Activated B cell treated with CpG ODN at 0.5 μM for 24 hours (primary cell): ENCODE measurements at regions of chr19 and their contacts with region 1.

Region 1: DNA sequence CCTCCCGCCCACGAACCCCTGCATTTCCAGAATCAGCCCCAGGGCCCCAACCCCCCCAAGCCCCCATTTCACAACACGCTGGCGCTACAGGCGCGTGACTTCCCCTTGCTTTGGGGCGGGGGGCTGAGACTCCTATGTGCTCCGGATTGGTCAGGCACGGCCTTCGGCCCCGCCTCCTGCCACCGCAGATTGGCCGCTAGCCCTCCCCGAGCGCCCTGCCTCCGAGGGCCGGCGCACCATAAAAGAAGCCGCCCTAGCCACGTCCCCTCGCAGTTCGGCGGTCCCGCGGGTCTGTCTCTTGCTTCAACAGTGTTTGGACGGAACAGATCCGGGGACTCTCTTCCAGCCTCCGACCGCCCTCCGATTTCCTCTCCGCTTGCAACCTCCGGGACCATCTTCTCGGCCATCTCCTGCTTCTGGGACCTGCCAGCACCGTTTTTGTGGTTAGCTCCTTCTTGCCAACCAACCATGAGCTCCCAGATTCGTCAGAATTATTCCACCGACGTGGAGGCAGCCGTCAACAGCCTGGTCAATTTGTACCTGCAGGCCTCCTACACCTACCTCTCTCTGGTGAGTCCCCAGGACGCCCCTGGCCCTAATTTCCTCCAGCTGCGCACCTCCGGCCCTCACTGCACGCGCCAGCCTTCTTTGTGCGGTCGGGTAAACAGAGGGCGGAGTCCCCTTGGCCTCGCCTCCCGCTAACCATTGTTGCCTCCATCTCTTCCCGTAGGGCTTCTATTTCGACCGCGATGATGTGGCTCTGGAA is at the start of gene FTL:
- DNase-seq: peak; percentile 88
- ATAC-seq: peak; percentile 80
- H3K4me3 Mint-ChIP-seq: peak within 1 kb of the TSS; percentile 99
- H3K27ac Mint-ChIP-seq: peak within 1 kb of the TSS; percentile 99
- H3K4me1 Mint-ChIP-seq: peaks cover 70% of the 10 kb centered on the region
- H3K27me3 Mint-ChIP-seq: no peaks in the 10 kb centered on the region
- CTCF ChIP-seq: no peak
- total RNA-seq, gene FTL: 888 and 935 TPM in 2 replicates

Region 2: GRCh38 chr19:48795055-48795684 is 170.1 kb before region 1 on chr19:
- CTCF ChIA-PET with region 1: interaction called, 46 read pairs
- POLR2A ChIA-PET with region 1: interaction called, 6 read pairs
- intact Hi-C with region 1: loop called (anchors 1 kb)
- DNase-seq: peak; percentile 79
- ATAC-seq: peak; percentile 98
- H3K4me3 Mint-ChIP-seq: peak overlapping the region; percentile 94
- H3K27ac Mint-ChIP-seq: peak overlapping the region; percentile 88
- H3K4me1 Mint-ChIP-seq: peaks cover 10% of the 10 kb centered on the region
- H3K27me3 Mint-ChIP-seq: no peaks in the 10 kb centered on the region
- CTCF ChIP-seq: peak; percentile 86

Region 3: GRCh38 chr19:48858984-48859710 is 106.1 kb before region 1 on chr19:
- CTCF ChIA-PET with region 1: no interaction called
- POLR2A ChIA-PET with region 1: interaction called, 7 read pairs
- intact Hi-C with region 1: loop called (anchors 5 kb)
- DNase-seq: peak; percentile 66
- ATAC-seq: peak; percentile 84
- H3K4me3 Mint-ChIP-seq: peak overlapping the region; percentile 92
- H3K27ac Mint-ChIP-seq: peak overlapping the region; percentile 87
- H3K4me1 Mint-ChIP-seq: peaks cover 7% of the 10 kb centered on the region
- H3K27me3 Mint-ChIP-seq: no peaks in the 10 kb centered on the region
- CTCF ChIP-seq: no peak

Region 4: GRCh38 chr19:48954595-48955310 is 10.5 kb before region 1 on chr19 and contains the start of gene BAX:
- CTCF ChIA-PET with region 1: interaction called, 3 read pairs
- POLR2A ChIA-PET with region 1: interaction called, 43 read pairs
- intact Hi-C with region 1: loop called (anchors 1 kb)
- DNase-seq: peak; percentile 93
- ATAC-seq: peak; percentile 89
- H3K4me3 Mint-ChIP-seq: peak within 1 kb of the TSS; percentile 91
- H3K27ac Mint-ChIP-seq: peak within 1 kb of the TSS; percentile 87
- H3K4me1 Mint-ChIP-seq: peaks cover 26% of the 10 kb centered on the region
- H3K27me3 Mint-ChIP-seq: no peaks in the 10 kb centered on the region
- CTCF ChIP-seq: no peak
- total RNA-seq, gene BAX: 111 and 129 TPM in 2 replicates

Region 5: DNA sequence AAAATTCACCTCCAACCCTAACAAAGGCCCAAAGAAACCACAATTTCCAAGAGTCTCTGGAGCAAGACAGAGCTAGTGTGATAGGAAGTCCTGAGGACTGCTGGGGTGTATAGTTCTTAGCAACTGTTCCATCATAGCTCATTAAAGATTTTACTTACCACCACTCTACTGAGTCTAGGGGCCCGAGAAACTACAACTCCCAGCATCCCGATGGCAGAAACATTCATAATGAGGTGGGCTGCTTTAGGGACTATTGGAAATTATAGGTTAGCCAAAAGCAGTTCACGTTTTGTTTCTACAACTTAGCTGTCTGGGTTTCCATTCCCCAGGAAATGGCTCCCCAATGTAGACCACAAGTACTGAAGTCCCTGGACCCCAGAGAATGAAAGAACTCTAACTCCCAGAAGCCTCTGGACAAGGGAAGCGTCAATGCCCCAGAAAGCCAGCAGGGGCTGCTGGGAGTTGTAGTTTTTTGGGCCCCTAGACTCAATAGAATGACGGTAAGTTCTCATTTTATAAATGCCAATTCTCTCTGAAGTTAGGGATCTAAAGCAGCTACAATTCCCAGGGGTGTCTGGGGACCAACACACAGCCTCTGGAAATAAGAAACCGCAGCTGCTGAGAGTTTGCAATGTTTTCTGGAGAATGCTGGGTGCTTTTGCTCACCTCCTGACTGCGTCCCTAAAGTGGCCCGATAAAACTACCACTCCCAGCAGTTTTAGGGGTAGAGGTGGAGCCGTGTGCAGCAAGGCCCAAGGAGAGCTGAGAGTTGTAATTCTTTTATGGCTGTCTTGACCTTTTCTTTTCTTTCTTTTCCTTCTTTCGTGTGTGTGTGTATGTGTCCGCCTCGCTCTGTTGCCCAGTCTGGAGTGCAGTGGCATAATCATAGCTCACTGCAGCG is 11.0 kb after region 1 on chr19:
- CTCF ChIA-PET with region 1: interaction called, 9 read pairs
- POLR2A ChIA-PET with region 1: interaction called, 15 read pairs
- intact Hi-C with region 1: loop called (anchors 1 kb)
- DNase-seq: no peak
- ATAC-seq: peak; percentile 64
- H3K4me3 Mint-ChIP-seq: no peak overlapping the region
- H3K27ac Mint-ChIP-seq: no peak overlapping the region
- H3K4me1 Mint-ChIP-seq: peaks cover 8% of the 10 kb centered on the region
- H3K27me3 Mint-ChIP-seq: no peaks in the 10 kb centered on the region
- CTCF ChIP-seq: no peak